CD8-positive, alpha-beta T cell (primary cell): ENCODE measurements at regions of chr19 and their contacts with region 1.

Region 1: DNA sequence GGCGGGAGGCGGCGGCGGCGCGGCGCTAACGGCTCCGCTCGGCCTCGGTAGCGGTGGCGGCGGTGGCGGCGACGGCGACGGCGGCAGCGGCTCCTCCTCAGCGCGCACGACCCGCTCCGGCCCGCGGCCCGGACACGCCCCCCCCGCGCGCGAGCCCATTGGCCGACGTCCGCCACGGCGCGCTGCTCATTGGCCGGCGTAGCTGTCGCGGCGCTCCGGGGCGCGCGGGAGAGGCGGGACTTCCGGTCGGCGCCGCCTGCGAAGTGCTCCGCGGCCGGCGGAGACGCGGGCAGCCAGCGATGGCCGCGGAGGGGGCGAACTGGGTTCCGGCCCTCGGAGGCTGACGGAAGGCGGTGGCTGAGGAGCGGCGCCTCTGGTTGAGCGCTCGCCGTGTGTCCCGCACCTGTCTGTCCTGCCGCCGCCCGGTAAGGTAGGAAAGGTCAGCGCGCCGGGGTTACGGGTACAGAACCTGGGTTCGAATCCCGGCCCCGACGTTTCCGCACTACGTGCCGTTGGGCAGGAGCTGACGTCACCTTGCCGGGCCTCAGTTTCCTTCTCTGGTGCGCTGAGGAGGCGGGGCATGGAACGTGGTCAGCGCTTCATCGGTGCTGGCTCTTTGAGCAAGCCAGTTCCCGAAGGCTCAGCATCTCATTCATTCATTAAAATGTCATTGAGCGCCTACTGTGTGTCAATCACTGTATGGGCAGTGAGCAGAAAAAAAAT is at the start of gene ELAVL1:
- DNase-seq: peak; percentile 78 to 95 (median 87)
- ATAC-seq: peak; percentile 91
- H3K4me3 ChIP-seq: peak within 1 kb of the TSS; percentile 66 to 87
- H3K4me3 Mint-ChIP-seq: peak within 1 kb of the TSS; percentile 85
- H3K27ac ChIP-seq: peak within 1 kb of the TSS; percentile 70
- H3K27ac Mint-ChIP-seq: peak within 1 kb of the TSS; percentile 81
- H3K4me1 ChIP-seq: peaks cover 38% of the 10 kb centered on the region
- H3K4me1 Mint-ChIP-seq: peaks cover 38% of the 10 kb centered on the region
- H3K27me3 ChIP-seq: no peaks in the 10 kb centered on the region
- H3K27me3 Mint-ChIP-seq: no peaks in the 10 kb centered on the region
- CTCF ChIP-seq: no peak
- total RNA-seq, gene ELAVL1: 19.9 to 23.5 TPM

Region 2: GRCh38 chr19:7852851-7853769 is 152.6 kb before region 1 on chr19:
- CTCF ChIA-PET with region 1: interaction called, 5 read pairs
- POLR2A ChIA-PET with region 1: no interaction called
- intact Hi-C with region 1: loop called in 1 of 2 experiments (anchors 10 kb)
- DNase-seq: peak; percentile 37 to 80 (median 69)
- ATAC-seq: peak; percentile 84
- H3K4me3 ChIP-seq: no peak overlapping the region
- H3K4me3 Mint-ChIP-seq: no peak overlapping the region
- H3K27ac ChIP-seq: no peak overlapping the region
- H3K27ac Mint-ChIP-seq: no peak overlapping the region
- H3K4me1 ChIP-seq: peaks cover 5% of the 10 kb centered on the region
- H3K4me1 Mint-ChIP-seq: peaks cover 2% of the 10 kb centered on the region
- H3K27me3 ChIP-seq: peaks cover 0 to 10% of the 10 kb centered on the region in 2 experiments
- H3K27me3 Mint-ChIP-seq: peaks cover 2% of the 10 kb centered on the region
- CTCF ChIP-seq: peak; percentile 85

Region 3: GRCh38 chr19:7925171-7925851 is 80.4 kb before region 1 on chr19:
- CTCF ChIA-PET with region 1: interaction called, 6 read pairs
- POLR2A ChIA-PET with region 1: no interaction called
- intact Hi-C with region 1: loop called in 1 of 2 experiments (anchors 5 kb)
- DNase-seq: peak; percentile 60 to 90 (median 84)
- ATAC-seq: peak; percentile 21
- H3K4me3 ChIP-seq: no peak overlapping the region
- H3K4me3 Mint-ChIP-seq: peak overlapping the region; percentile 77
- H3K27ac ChIP-seq: no peak overlapping the region
- H3K27ac Mint-ChIP-seq: peak overlapping the region; percentile 45
- H3K4me1 ChIP-seq: peaks cover 24% of the 10 kb centered on the region
- H3K4me1 Mint-ChIP-seq: peaks cover 32% of the 10 kb centered on the region
- H3K27me3 ChIP-seq: no peaks in the 10 kb centered on the region
- H3K27me3 Mint-ChIP-seq: no peaks in the 10 kb centered on the region
- CTCF ChIP-seq: peak; percentile 73

Region 4: GRCh38 chr19:7970716-7971448 is 34.8 kb before region 1 on chr19:
- CTCF ChIA-PET with region 1: interaction called, 12 read pairs
- POLR2A ChIA-PET with region 1: no interaction called
- intact Hi-C with region 1: no loop called
- DNase-seq: peak in 4 of 9 experiments; percentile 14 to 46 (median 25)
- ATAC-seq: no peak
- H3K4me3 ChIP-seq: no peak overlapping the region
- H3K4me3 Mint-ChIP-seq: no peak overlapping the region
- H3K27ac ChIP-seq: no peak overlapping the region
- H3K27ac Mint-ChIP-seq: no peak overlapping the region
- H3K4me1 ChIP-seq: no peaks in the 10 kb centered on the region
- H3K4me1 Mint-ChIP-seq: no peaks in the 10 kb centered on the region
- H3K27me3 ChIP-seq: no peaks in the 10 kb centered on the region
- H3K27me3 Mint-ChIP-seq: no peaks in the 10 kb centered on the region
- CTCF ChIP-seq: peak; percentile 58

Region 5: GRCh38 chr19:7989071-7989575 is 16.6 kb before region 1 on chr19:
- CTCF ChIA-PET with region 1: interaction called, 12 read pairs
- POLR2A ChIA-PET with region 1: no interaction called
- intact Hi-C with region 1: no loop called
- DNase-seq: no peak
- ATAC-seq: no peak
- H3K4me3 ChIP-seq: no peak overlapping the region
- H3K4me3 Mint-ChIP-seq: no peak overlapping the region
- H3K27ac ChIP-seq: no peak overlapping the region
- H3K27ac Mint-ChIP-seq: no peak overlapping the region
- H3K4me1 ChIP-seq: no peaks in the 10 kb centered on the region
- H3K4me1 Mint-ChIP-seq: peaks cover 16% of the 10 kb centered on the region
- H3K27me3 ChIP-seq: no peaks in the 10 kb centered on the region
- H3K27me3 Mint-ChIP-seq: no peaks in the 10 kb centered on the region
- CTCF ChIP-seq: no peak

Region 6: GRCh38 chr19:9782330-9782729 is 1776.6 kb after region 1 on chr19:
- CTCF ChIA-PET with region 1: no interaction called
- POLR2A ChIA-PET with region 1: no interaction called
- intact Hi-C with region 1: no loop called
- DNase-seq: no peak
- ATAC-seq: no peak
- H3K4me3 ChIP-seq: no peak overlapping the region
- H3K4me3 Mint-ChIP-seq: no peak overlapping the region
- H3K27ac ChIP-seq: no peak overlapping the region
- H3K27ac Mint-ChIP-seq: peak overlapping the region; percentile 43
- H3K4me1 ChIP-seq: peaks cover 10% of the 10 kb centered on the region
- H3K4me1 Mint-ChIP-seq: peaks cover 24% of the 10 kb centered on the region
- H3K27me3 ChIP-seq: no peaks in the 10 kb centered on the region
- H3K27me3 Mint-ChIP-seq: no peaks in the 10 kb centered on the region
- CTCF ChIP-seq: no peak